Naive thymus-derived CD4-positive, alpha-beta T cell (primary cell): ENCODE measurements at regions of chr10 and their contacts with region 1.

Region 1: DNA sequence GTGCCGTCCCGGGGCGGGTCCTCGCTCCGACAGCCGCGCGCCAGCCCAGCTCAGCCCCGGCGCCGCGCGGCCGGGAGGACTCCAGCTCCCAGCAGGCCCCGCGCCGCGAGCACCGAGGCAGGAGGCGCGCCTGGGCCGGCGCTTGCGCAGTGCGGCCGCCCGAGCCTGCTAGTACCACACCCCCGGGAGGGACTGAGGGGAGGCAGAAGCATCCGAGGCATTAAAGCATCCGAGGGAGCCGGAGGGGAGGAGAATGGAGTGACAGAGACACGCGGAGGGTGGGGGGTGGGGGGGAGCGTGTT is at the start of gene GRK5:
- DNase-seq: peak; percentile 96 to 99 (median 98)
- ATAC-seq: peak; percentile 91
- H3K4me3 ChIP-seq: peak within 1 kb of the TSS; percentile 75
- H3K4me3 Mint-ChIP-seq: peak within 1 kb of the TSS; percentile 94 to 98 (median 97)
- H3K27ac ChIP-seq: peak within 1 kb of the TSS; percentile 89
- H3K27ac Mint-ChIP-seq: peak within 1 kb of the TSS; percentile 91 to 99 (median 96)
- H3K4me1 ChIP-seq: peaks cover 23 to 35% of the 10 kb centered on the region in 2 donors
- H3K4me1 Mint-ChIP-seq: peaks cover 41 to 48% (median 44%) of the 10 kb centered on the region in 7 donors
- H3K27me3 ChIP-seq: no peaks in the 10 kb centered on the region
- H3K27me3 Mint-ChIP-seq: no peaks in the 10 kb centered on the region
- total RNA-seq, gene GRK5: 20.3 to 45.2 (median 34.2) TPM

Region 2: GRCh38 chr10:119131512-119132240 is 75.6 kb before region 1 on chr10:
- CTCF ChIA-PET with region 1: interaction called, 3 read pairs
- POLR2A ChIA-PET with region 1: no interaction called
- intact Hi-C with region 1: loop called in 1 of 2 experiments (anchors 5 kb)
- DNase-seq: peak in 8 of 9 donors; percentile 24 to 61 (median 40)
- ATAC-seq: peak; percentile 77
- H3K4me3 ChIP-seq: peak overlapping the region; percentile 73
- H3K4me3 Mint-ChIP-seq: peak overlapping the region; percentile 81 to 96 (median 91)
- H3K27ac ChIP-seq: peak overlapping the region; percentile 66
- H3K27ac Mint-ChIP-seq: peak overlapping the region; percentile 92 to 97 (median 95)
- H3K4me1 ChIP-seq: peaks cover 8 to 16% of the 10 kb centered on the region in 2 donors
- H3K4me1 Mint-ChIP-seq: peaks cover 16 to 59% (median 32%) of the 10 kb centered on the region in 7 donors
- H3K27me3 ChIP-seq: no peaks in the 10 kb centered on the region
- H3K27me3 Mint-ChIP-seq: no peaks in the 10 kb centered on the region

Region 3: DNA sequence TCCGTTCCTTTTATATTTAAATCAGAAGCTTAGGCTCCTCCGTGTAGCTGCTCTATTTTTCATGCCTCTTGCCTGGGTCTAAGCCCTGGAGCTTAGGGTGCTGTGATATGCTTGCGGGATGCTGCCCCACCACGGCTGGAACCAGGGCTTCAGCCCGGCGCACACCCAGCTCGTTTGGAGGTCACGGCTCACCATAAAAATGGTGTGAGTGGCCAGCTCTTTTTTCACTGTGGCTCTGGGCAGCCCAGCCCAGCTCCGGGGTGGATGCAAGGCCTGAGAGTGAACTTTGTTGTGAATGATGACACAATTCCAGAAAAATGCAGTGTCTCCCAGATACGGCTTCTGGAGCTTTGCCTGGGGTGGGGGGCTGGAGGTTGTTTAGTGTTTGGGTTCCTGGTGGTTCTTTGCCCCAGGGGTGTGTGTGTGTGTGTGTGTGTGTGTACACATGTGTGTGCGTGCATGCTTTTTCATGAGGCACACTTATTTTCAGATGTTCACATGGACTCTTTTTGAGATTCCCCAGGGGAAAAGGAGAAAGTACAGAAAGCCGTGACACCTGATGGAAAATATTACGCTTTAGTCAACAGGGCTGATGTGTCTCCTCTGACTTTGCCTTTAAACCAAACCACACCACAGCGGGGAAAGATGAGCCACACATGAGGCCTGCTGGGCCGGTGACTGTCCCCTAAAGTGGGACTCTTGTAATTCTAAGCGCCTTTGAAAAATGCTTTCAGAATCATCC is 46.3 kb after region 1 on chr10:
- CTCF ChIA-PET with region 1: no interaction called
- POLR2A ChIA-PET with region 1: no interaction called
- intact Hi-C with region 1: loop called (anchors 2 to 5 kb)
- DNase-seq: peak in 1 of 9 donors; percentile 58
- ATAC-seq: no peak
- H3K4me3 ChIP-seq: no peak overlapping the region
- H3K4me3 Mint-ChIP-seq: no peak overlapping the region
- H3K27ac ChIP-seq: no peak overlapping the region
- H3K27ac Mint-ChIP-seq: peak overlapping the region in 7 of 9 donors; percentile 3 to 86 (median 51)
- H3K4me1 ChIP-seq: no peaks in the 10 kb centered on the region
- H3K4me1 Mint-ChIP-seq: peaks cover 17 to 59% (median 44%) of the 10 kb centered on the region in 7 donors
- H3K27me3 ChIP-seq: no peaks in the 10 kb centered on the region
- H3K27me3 Mint-ChIP-seq: no peaks in the 10 kb centered on the region

Region 4: DNA sequence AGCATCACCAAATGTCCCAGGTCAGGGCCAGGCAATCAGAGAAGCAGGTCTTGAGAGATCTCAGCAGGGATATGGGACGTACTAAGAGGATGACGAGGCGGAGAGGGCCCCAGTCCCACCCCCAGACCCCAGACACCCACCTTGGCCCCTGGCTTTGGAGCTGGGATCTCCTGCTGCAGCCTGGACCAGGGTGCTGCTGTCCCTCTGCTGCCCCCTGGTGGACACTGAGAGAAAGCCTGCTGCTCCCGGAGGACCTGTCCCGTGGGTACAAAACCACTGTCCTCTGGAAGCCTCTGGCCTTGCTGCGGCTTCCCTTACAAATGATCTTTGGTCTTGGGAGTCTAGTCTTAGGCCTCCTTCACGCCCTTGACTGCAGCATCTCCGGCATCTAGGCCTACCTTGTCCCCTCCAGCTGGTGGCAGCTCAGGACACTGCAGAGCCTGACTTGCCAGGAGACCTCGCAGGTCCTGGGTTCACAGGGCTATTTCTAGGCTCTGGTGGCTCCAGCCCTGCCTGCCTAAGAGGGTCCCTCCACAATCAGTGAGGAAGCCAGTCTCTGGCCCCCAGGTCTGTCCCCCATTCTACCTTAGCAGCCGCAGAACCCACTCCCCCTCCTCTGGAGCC is 238.1 kb after region 1 on chr10:
- CTCF ChIA-PET with region 1: interaction called, 16 read pairs
- POLR2A ChIA-PET with region 1: interaction called, 3 read pairs
- intact Hi-C with region 1: loop called (anchors 1 to 2 kb)
- DNase-seq: peak; percentile 64 to 89 (median 76)
- ATAC-seq: peak; percentile 85
- H3K4me3 ChIP-seq: no peak overlapping the region
- H3K4me3 Mint-ChIP-seq: peak overlapping the region in 1 of 10 donors; percentile 60
- H3K27ac ChIP-seq: no peak overlapping the region
- H3K27ac Mint-ChIP-seq: peak overlapping the region in 8 of 9 donors; percentile 6 to 81 (median 52)
- H3K4me1 ChIP-seq: no peaks in the 10 kb centered on the region
- H3K4me1 Mint-ChIP-seq: peaks cover 12 to 23% (median 17%) of the 10 kb centered on the region in 7 donors
- H3K27me3 ChIP-seq: no peaks in the 10 kb centered on the region
- H3K27me3 Mint-ChIP-seq: no peaks in the 10 kb centered on the region

Region 5: GRCh38 chr10:119650692-119651513 is 443.6 kb after region 1 on chr10 and contains the start of gene BAG3:
- CTCF ChIA-PET with region 1: no interaction called
- POLR2A ChIA-PET with region 1: no interaction called
- intact Hi-C with region 1: loop called (anchors 1 to 2 kb)
- DNase-seq: peak; percentile 50 to 84 (median 67)
- ATAC-seq: peak; percentile 88
- H3K4me3 ChIP-seq: peak within 1 kb of the TSS; percentile 83
- H3K4me3 Mint-ChIP-seq: peak within 1 kb of the TSS; percentile 93 to 100 (median 97)
- H3K27ac ChIP-seq: peak within 1 kb of the TSS; percentile 93
- H3K27ac Mint-ChIP-seq: peak within 1 kb of the TSS; percentile 91 to 99 (median 97)
- H3K4me1 ChIP-seq: peaks cover 20 to 29% of the 10 kb centered on the region in 2 donors
- H3K4me1 Mint-ChIP-seq: peaks cover 29 to 48% (median 44%) of the 10 kb centered on the region in 7 donors
- H3K27me3 ChIP-seq: no peaks in the 10 kb centered on the region
- H3K27me3 Mint-ChIP-seq: peaks cover 0 to 2% (median 0%) of the 10 kb centered on the region in 5 donors
- total RNA-seq, gene BAG3: 21.9 to 44.5 (median 23.1) TPM